Left ventricle myocardium inferior (tissue), 1 donor: ENCODE measurements at regions of chr11 and their contacts with region 1.

Region 1: DNA sequence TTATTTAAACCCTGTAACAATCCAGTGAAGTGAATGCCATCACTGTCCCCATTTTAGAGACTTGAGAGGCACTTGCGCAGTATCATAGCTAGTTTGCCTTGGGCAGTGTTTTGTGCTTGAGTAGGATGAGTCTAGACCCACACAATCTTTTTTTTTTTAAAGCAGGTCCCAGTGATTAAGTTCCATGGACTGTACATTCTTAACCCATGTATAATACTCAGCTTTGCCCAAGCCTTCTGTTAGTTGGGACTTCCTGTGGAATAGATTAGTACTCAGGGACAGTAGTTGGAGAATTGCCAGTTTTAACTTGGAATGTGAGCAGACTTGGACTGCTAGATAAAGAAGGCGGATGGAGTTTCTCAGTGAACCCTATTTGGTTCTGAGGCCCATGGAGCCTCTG is 108.6 kb upstream of the RASSF10 start:
- DNase-seq: no peak
- H3K4me3 ChIP-seq: no peak overlapping the region
- H3K27ac ChIP-seq: peak overlapping the region; percentile 86
- H3K4me1 ChIP-seq: peaks cover 54% of the 10 kb centered on the region
- H3K27me3 ChIP-seq: no peaks in the 10 kb centered on the region
- CTCF ChIP-seq: no peak

Region 2: DNA sequence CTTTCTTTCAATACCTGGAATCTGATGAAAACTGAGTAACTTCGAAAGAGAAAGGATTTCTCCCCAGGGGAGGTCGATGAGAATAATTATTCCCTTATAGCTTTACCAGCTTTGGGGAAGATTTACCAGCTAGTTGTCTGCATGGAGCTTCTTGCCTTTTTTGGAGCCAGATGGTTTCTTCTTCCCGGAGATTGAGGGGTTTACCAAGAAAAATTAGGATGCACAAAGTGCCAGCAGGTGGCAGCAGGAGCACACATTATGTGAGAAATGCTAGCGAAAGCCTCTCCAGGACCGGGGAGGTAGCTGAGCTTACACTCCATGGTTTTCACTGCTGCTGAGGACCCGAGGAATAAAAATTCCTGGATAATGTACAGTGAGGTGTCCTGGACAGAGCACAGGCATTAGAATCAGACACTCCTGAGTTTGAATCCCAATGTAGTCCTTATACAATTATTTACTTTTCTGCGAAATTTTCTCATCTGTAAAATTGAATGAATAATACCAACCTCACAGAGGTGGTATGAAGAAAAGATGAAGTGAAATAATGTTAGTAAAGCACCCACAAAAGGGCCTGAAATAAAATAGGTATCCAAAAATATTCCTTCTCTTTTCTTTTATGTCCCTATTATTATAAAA is 569.1 kb before region 1 on chr11:
- intact Hi-C with region 1: loop called (anchors 5 kb)
- DNase-seq: peak; percentile 77
- H3K4me3 ChIP-seq: no peak overlapping the region
- H3K27ac ChIP-seq: no peak overlapping the region
- H3K4me1 ChIP-seq: peaks cover 4% of the 10 kb centered on the region
- H3K27me3 ChIP-seq: no peaks in the 10 kb centered on the region
- CTCF ChIP-seq: peak; percentile 83

Region 3: DNA sequence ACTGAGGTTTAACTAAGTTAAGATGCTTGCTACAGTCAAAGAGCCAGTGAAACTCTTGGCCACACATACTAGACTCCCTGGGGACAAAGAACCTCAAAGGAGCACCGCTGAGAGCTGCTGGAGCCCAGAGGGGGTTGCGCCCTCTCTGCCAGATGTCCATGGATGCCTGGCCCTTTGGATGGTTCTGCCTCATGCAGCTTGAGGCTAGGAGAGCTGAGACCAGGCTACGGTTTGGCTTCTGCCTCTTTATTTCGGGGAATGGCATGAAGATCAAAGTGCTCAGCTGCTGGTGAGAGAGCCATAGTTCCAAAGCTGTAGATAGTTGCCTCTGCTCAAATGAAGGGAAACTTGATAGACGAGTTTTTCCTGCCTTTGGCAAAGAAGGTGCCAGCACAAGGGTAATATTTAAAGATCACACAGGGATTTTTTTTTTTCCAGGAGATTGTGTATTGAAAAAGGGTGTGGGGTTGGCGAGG is 151.7 kb after region 1 on chr11:
- intact Hi-C with region 1: no loop called
- DNase-seq: no peak
- H3K4me3 ChIP-seq: no peak overlapping the region
- H3K27ac ChIP-seq: no peak overlapping the region
- H3K4me1 ChIP-seq: no peaks in the 10 kb centered on the region
- H3K27me3 ChIP-seq: peaks cover 24% of the 10 kb centered on the region
- CTCF ChIP-seq: no peak